ENCODE measurements at regions of chr4 and their contacts with region 1.

Region 1: GRCh38 chr4:111595456-111595855 is 549.8 kb upstream of the FAM241A start:
- DNase-seq: no peak
- ATAC-seq: no peak
- H3K4me3 ChIP-seq: no peak overlapping the region
- H3K27ac ChIP-seq: no peak overlapping the region
- H3K4me1 ChIP-seq: no peaks in the 10 kb centered on the region
- H3K27me3 ChIP-seq: no peaks in the 10 kb centered on the region
- CTCF ChIP-seq: no peak

Region 2: GRCh38 chr4:109803924-109804571 is 1791.4 kb before region 1 on chr4:
- intact Hi-C with region 1: loop called in 1 of 2 experiments (anchors 10 kb)
- DNase-seq: no peak
- ATAC-seq: peak in 3 of 4 donors; percentile 46 to 63 (median 53)
- H3K4me3 ChIP-seq: no peak overlapping the region
- H3K27ac ChIP-seq: no peak overlapping the region
- H3K4me1 ChIP-seq: no peaks in the 10 kb centered on the region
- H3K27me3 ChIP-seq: no peaks in the 10 kb centered on the region
- CTCF ChIP-seq: peak; percentile 39

Region 3: GRCh38 chr4:111631215-111631999 is 36.0 kb after region 1 on chr4:
- intact Hi-C with region 1: no loop called
- DNase-seq: no peak
- ATAC-seq: no peak
- H3K4me3 ChIP-seq: no peak overlapping the region
- H3K27ac ChIP-seq: no peak overlapping the region
- H3K4me1 ChIP-seq: no peaks in the 10 kb centered on the region
- H3K27me3 ChIP-seq: no peaks in the 10 kb centered on the region
- CTCF ChIP-seq: no peak